ENCODE measurements at regions of chr5 and their contacts with region 1.

Region 1: GRCh38 chr5:43313035-43313853 is at the start of gene HMGCS1:
- DNase-seq: peak; percentile 100
- H3K4me3 Mint-ChIP-seq: peak within 1 kb of the TSS; percentile 99
- H3K27ac Mint-ChIP-seq: peak within 1 kb of the TSS; percentile 98
- H3K4me1 Mint-ChIP-seq: peaks cover 75% of the 10 kb centered on the region
- H3K27me3 Mint-ChIP-seq: no peaks in the 10 kb centered on the region
- total RNA-seq, gene HMGCS1: 105 TPM

Region 2: DNA sequence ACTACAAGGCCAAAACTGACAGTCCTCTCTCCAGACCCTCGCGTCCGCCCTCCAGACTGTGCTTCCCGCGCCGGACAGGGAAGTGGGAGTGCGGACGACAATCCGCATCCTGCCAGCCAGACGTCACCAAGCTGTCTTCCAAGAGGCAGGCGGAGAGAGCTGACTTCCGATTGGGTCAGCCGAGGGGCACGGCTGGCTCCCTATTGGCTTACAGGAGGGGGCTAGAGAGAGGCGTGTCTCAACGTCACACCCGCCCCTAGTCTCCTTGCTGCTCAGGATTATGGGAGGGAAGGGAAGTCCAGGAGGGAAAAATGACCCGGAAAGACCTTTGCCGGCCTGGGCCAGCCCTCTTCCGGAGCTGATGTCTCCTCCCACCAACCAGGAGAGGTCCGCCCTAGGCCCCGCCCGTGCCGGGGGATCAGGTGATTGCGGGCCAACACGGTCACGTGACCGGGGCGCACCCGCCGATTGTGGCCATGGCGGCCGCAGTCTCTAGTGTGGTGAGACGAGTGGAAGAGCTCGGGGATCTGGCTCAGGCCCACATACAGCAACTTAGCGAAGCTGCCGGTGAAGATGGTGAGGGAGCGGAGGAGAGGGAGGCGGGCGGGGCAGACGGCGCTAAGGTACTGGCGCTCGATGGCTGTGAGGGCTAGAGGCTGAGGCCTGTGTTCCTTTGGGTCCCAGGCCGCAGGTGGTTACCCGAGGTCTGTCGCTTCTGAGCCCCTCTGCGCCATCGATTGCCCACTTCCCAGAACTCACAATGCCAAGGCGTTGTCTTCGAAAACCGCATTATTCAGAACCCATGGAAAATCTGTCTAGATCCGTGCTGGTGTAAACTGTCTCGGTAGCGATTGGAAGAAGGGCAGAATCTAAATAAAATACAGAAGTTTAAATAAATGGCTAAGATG is 1409.1 kb before region 1 on chr5 and contains the start of gene RIMOC1:
- CTCF ChIA-PET with region 1: no interaction called
- intact Hi-C with region 1: loop called (anchors 10 kb)
- DNase-seq: peak; percentile 98
- H3K4me3 Mint-ChIP-seq: peak within 1 kb of the TSS; percentile 79
- H3K27ac Mint-ChIP-seq: peak within 1 kb of the TSS; percentile 88
- H3K4me1 Mint-ChIP-seq: peaks cover 38% of the 10 kb centered on the region
- H3K27me3 Mint-ChIP-seq: no peaks in the 10 kb centered on the region
- total RNA-seq, gene RIMOC1: 16.6 to 19.6 TPM

Region 3: GRCh38 chr5:43008369-43009153 is 304.7 kb before region 1 on chr5:
- CTCF ChIA-PET with region 1: no interaction called
- intact Hi-C with region 1: loop called (anchors 1 kb)
- DNase-seq: peak; percentile 93
- H3K4me3 Mint-ChIP-seq: peak overlapping the region; percentile 79
- H3K27ac Mint-ChIP-seq: peak overlapping the region; percentile 97
- H3K4me1 Mint-ChIP-seq: peaks cover 24% of the 10 kb centered on the region
- H3K27me3 Mint-ChIP-seq: no peaks in the 10 kb centered on the region

Region 4: DNA sequence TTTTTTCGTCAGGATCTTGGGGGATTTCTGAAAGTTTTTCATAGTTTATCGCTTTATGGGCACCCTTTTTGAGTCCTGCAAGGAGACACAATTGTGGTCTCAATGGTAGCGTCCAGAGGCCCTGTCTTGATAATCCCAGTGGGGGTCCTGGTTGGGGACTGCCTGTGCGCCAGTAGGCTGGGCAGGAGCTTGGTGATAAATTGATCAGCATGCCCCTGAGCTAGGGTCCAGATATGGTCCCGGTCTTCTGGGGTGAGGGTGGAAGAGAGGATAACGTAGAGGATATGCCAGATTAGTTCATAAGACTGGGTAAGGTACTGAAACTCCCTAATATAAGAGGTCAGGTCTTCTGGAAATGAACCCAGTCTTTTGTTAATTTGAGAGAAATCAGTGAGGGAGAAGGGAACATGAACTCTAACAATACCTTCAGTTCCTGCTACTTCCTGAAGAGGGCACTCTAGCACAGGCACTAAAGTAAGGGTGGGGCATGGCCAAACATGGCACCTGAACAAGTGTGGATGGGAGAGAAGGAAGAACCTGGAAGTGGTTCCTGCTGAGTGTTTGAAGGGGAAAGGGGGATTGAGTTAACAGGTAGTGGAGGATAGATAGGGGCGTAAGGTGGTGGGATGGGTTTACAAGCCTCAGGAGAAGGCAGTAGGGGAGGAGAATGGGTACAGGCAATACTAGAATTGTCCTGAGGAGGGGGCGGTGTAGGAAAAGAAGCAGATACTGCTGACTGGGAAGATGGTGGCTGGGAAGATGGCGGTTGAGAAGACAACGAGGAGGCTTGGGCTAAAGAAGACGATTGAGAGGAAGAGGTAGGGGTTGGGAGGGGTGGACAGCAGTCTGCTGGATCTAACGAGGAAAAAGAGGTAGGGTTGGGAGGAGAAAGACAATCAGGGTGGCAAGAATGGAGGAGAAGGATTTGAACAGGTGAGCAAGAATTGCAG is 239.4 kb before region 1 on chr5:
- CTCF ChIA-PET with region 1: interaction called, 3 read pairs
- intact Hi-C with region 1: loop called (anchors 2 kb)
- DNase-seq: peak; percentile 70
- H3K4me3 Mint-ChIP-seq: no peak overlapping the region
- H3K27ac Mint-ChIP-seq: peak overlapping the region; percentile 43
- H3K4me1 Mint-ChIP-seq: peaks cover 39% of the 10 kb centered on the region
- H3K27me3 Mint-ChIP-seq: no peaks in the 10 kb centered on the region

Region 5: DNA sequence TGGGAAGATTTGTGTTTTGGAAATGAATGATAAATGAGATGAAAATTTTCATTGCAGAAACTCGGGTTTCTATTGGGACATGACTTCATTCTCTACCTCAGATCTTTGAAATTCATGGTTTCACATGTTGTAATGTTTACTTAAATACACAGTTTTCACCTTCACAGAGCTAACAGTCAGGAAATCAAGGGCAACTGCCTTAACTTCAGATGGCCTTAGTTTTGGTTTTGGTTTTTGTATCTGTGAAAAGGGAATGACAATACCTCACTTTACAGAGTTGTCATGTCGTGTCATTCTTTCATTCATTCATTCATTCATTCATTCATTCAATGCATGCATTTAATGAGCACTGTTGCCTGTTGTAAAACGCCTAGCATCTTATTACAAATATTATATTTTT is 79.3 kb before region 1 on chr5:
- CTCF ChIA-PET with region 1: interaction called, 3 read pairs
- intact Hi-C with region 1: loop called (anchors 2 kb)
- DNase-seq: no peak
- H3K4me3 Mint-ChIP-seq: no peak overlapping the region
- H3K27ac Mint-ChIP-seq: no peak overlapping the region
- H3K4me1 Mint-ChIP-seq: peaks cover 5% of the 10 kb centered on the region
- H3K27me3 Mint-ChIP-seq: no peaks in the 10 kb centered on the region

Region 6: DNA sequence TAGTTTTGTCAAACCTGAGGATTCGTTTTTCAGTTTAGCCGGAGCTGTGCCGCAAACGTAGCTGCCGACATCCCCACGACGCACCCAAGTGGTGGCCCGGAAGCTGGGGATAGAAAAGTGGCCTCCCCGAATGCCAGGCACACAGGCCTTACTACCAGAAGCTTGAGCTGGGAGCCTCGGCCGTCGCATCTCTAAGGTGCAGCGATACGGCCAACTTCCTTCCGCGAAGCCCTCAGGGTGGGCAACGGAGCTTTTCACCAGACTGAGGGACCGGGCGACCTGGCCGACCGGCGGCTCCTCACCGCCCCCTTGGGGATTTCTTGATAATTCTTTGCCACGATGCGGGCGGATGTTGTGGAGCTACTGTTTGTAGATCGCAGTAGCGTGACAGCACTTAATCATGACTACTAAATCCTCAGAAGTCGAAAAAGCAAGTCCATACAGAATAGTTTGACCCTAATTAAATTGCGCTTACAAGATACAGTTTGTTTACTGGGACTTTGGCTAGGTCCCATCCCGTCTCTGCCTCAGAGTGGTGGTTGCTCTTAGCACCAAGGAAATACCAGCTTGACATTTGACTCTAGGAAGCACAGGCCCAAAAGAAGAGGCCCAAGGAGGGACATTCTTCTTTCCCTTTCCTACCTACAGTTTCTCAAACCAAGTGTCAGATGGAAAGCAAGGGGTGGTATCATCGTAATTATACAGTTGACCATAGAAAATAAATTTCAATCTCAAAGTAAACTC is 171.0 kb after region 1 on chr5:
- CTCF ChIA-PET with region 1: interaction called, 3 read pairs
- intact Hi-C with region 1: loop called (anchors 1 kb)
- DNase-seq: peak; percentile 92
- H3K4me3 Mint-ChIP-seq: peak overlapping the region; percentile 97
- H3K27ac Mint-ChIP-seq: peak overlapping the region; percentile 99
- H3K4me1 Mint-ChIP-seq: peaks cover 45% of the 10 kb centered on the region
- H3K27me3 Mint-ChIP-seq: no peaks in the 10 kb centered on the region

Region 7: GRCh38 chr5:43772764-43773477 is 459.7 kb after region 1 on chr5:
- CTCF ChIA-PET with region 1: no interaction called
- intact Hi-C with region 1: loop called (anchors 1 kb)
- DNase-seq: no peak
- H3K4me3 Mint-ChIP-seq: no peak overlapping the region
- H3K27ac Mint-ChIP-seq: peak overlapping the region; percentile 82
- H3K4me1 Mint-ChIP-seq: peaks cover 21% of the 10 kb centered on the region
- H3K27me3 Mint-ChIP-seq: no peaks in the 10 kb centered on the region

Measured in activated naive CD4-positive, alpha-beta T cell treated with anti-CD3 and anti-CD28 coated beads for 36 hours (primary cell).